ENCODE measurements at regions of chr12 and their contacts with region 1.

Region 1: DNA sequence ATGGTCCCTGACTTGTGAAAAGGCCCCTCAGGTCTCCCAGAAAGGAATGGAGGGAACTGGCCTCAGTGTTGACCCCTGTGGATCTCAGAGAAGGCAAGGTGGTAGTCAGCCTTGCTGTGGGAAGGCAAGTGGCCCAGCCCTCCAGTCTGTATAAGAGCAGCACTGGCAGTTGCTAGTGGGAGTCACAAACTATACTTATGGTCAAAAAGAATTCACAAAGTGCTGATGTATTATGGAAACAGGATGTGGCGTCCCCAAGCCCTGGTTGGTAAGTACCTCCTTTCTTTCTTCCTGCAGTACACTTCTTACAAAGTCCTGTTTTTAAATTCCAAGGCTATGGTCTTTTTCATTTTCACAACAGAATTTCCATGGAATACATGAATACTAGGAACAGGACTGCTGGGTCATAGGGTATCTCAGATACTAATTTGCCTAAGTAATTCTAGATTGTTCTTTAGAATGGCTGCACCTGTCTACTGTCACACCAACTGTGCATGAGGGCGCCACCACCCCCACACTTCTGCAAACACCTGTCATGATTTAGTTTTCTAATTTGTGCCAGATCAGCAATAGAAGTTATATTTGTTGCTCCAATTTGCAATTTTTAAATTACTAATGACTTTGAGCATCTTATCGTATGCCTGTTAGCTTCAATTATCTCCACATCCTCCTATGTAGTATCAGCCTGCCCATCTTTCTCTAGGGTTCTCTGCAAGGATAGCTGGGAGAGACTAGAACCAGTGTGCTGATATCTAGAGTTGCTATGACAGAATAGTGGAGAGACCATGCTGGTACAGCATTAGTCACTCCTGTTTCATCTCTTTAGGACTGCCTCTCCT is 40.7 kb upstream of the TMEM263 start:
- DNase-seq: peak; percentile 16
- H3K4me3 Mint-ChIP-seq: peak overlapping the region; percentile 8
- H3K27ac Mint-ChIP-seq: peak overlapping the region; percentile 83
- H3K4me1 Mint-ChIP-seq: peaks cover 34% of the 10 kb centered on the region
- H3K27me3 Mint-ChIP-seq: peaks cover 2% of the 10 kb centered on the region

Region 2: GRCh38 chr12:106573239-106573638 is 341.8 kb before region 1 on chr12:
- intact Hi-C with region 1: no loop called
- DNase-seq: no peak
- H3K4me3 Mint-ChIP-seq: no peak overlapping the region
- H3K27ac Mint-ChIP-seq: no peak overlapping the region
- H3K4me1 Mint-ChIP-seq: no peaks in the 10 kb centered on the region
- H3K27me3 Mint-ChIP-seq: peaks cover 27% of the 10 kb centered on the region

Region 3: GRCh38 chr12:106855221-106855758 is 59.7 kb before region 1 on chr12:
- intact Hi-C with region 1: loop called (anchors 2 kb)
- DNase-seq: no peak
- H3K4me3 Mint-ChIP-seq: no peak overlapping the region
- H3K27ac Mint-ChIP-seq: no peak overlapping the region
- H3K4me1 Mint-ChIP-seq: peaks cover 2% of the 10 kb centered on the region
- H3K27me3 Mint-ChIP-seq: no peaks in the 10 kb centered on the region